Aorta (tissue), 5 donors: ENCODE measurements at regions of chr7 and their contacts with region 1.

Region 1: DNA sequence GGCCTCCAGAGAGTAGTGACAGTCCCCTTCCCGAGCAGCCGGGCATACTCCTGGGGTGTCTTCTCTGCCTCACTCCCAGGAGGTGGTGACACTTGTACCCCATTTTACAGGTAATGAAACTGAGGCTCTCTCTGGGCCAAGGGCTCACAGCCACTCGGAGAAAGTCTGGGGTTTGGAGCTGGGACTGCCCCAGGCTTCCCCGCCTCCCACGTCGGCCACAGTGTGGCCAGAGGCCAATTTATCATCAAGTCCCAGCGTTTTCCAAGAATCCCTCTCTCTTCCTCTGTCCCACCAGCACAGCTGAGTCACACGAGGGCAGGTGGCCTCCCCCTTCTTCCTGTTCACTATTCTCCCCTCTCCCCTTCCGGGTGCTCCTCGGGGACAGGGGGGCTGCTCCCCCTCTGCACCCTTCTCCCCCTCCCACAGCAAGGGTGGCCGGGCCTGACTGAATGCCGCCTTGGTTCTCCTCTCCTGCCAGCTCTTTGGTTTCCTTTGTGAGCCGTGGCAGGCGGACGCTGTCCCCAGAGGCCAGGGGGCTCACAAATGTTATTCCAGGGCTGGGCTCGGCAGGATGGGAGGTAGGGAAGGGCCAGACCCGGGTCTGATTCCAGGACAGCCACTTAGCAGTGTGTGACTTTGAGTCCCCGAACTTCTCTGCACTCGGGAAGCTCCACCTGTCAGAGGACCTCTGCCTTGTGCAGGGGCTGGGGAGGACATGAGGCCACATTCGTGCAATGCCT is 17.7 kb downstream of the CLIP2 start:
- DNase-seq: peak; percentile 84 to 86
- ATAC-seq: peak; percentile 76
- H3K4me3 ChIP-seq: no peak overlapping the region
- H3K27ac ChIP-seq: peak overlapping the region; percentile 16 to 62
- H3K4me1 ChIP-seq: no peaks in the 10 kb centered on the region
- H3K27me3 ChIP-seq: no peaks in the 10 kb centered on the region

Region 2: DNA sequence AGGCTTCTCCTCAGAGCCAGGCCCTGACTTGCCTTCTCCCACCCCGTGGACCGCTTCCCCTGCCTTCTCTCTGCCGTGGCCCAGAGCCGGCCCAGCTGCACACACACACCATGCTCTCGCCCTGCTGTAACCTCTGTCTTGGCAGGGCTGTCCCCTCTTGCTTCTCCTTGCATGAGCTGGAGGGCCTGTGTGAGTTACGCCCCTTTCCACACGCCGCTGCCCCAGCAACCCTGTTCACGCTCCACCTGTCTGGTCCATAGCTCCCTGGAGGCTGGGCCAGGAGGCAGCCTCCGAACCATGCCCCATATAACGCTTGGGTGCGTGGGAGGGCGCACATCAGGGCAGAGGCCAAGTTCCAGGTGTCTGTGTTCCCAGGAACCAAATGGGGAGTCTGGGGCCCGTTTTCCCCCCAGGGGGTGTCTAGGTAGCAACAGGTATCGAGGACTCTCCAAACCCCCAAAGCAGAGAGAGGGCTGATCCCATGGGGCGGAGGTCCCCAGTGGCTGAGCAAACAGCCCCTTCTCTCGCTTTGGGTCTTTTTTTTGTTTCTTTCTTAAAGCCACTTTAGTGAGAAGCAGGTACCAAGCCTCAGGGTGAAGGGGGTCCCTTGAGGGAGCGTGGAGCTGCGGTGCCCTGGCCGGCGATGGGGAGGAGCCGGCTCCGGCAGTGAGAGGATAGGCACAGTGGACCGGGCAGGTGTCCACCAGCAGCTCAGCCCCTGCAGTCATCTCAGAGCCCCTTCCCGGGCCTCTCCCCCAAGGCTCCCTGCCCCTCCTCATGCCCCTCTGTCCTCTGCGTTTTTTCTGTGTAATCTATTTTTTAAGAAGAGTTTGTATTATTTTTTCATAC is 185.3 kb before region 1 on chr7:
- intact Hi-C with region 1: no loop called
- DNase-seq: no peak
- ATAC-seq: peak; percentile 36
- H3K4me3 ChIP-seq: no peak overlapping the region
- H3K27ac ChIP-seq: no peak overlapping the region
- H3K4me1 ChIP-seq: no peaks in the 10 kb centered on the region
- H3K27me3 ChIP-seq: no peaks in the 10 kb centered on the region

Region 3: GRCh38 chr7:74254129-74254857 is 52.6 kb before region 1 on chr7 and contains the start of gene RFC2:
- intact Hi-C with region 1: loop called in 1 of 2 experiments (anchors 5 kb)
- DNase-seq: peak; percentile 98 to 99
- ATAC-seq: peak; percentile 100
- H3K4me3 ChIP-seq: peak within 1 kb of the TSS; percentile 70 to 85
- H3K27ac ChIP-seq: peak within 1 kb of the TSS in 1 of 2 donors; percentile 60
- H3K4me1 ChIP-seq: no peaks in the 10 kb centered on the region
- H3K27me3 ChIP-seq: no peaks in the 10 kb centered on the region
- total RNA-seq, gene RFC2: 13.7 to 14.2 TPM

Region 4: DNA sequence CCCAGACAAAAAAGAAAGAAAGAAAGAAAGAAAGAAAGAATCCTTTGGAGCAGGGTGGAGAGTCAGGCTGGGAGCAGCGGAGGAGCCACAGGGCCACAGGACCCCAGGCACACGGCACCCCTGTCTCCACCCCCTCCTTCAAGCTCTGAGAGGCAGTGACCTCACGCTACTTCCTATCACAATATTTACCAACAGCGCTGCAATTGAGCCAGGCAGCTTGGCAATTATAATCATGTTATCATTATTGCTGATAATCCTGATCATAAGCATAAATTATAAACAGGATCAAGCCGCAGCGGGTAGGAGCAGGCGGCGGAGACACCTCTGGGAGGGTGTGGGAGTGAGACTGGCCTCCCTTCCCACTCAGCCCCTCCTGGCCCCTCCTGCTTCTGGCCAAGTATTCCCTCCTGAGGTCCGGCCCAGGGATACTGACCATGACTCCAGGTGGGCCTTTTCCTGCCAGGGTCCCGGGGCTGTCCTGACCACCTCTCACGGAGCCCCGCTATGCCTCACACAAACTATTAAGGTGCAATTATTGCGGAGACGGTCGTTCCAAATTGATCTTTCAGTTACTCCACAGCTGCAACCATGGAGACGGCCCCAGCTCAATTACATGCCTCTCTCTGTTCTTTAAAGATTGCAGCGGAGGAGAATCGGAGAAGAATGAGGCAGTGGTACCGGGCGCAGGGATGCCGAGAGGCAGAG is 136.8 kb after region 1 on chr7:
- intact Hi-C with region 1: no loop called
- DNase-seq: no peak
- ATAC-seq: no peak
- H3K4me3 ChIP-seq: no peak overlapping the region
- H3K27ac ChIP-seq: no peak overlapping the region
- H3K4me1 ChIP-seq: no peaks in the 10 kb centered on the region
- H3K27me3 ChIP-seq: no peaks in the 10 kb centered on the region